Activated T-helper 1 cell treated with anti-CD3 and anti-CD28 coated beads, Interleukin-12 subunit alpha, Interleukin-12 subunit beta, Interleukin-2, Interleukin-4 antibody, amounts not matched to agents 30 ng/mL and 10 ng/mL and 1 ng/mL, durations not matched to agents 14 hours and 24 hours and 36 hours (primary cell): ENCODE measurements at regions of chr7 and their contacts with region 1.

Region 1: GRCh38 chr7:99392677-99393354 is 15.6 kb downstream of the PDAP1 start:
- DNase-seq: peak; percentile 69
- H3K4me3 Mint-ChIP-seq: peak overlapping the region; percentile 63
- H3K27ac Mint-ChIP-seq: peak overlapping the region; percentile 68
- H3K4me1 Mint-ChIP-seq: peaks cover 16% of the 10 kb centered on the region
- H3K27me3 Mint-ChIP-seq: no peaks in the 10 kb centered on the region

Region 2: GRCh38 chr7:98930921-98931320 is 461.9 kb before region 1 on chr7:
- intact Hi-C with region 1: no loop called
- DNase-seq: peak; percentile 8
- H3K4me3 Mint-ChIP-seq: no peak overlapping the region
- H3K27ac Mint-ChIP-seq: peak overlapping the region; percentile 63
- H3K4me1 Mint-ChIP-seq: peaks cover 8% of the 10 kb centered on the region
- H3K27me3 Mint-ChIP-seq: no peaks in the 10 kb centered on the region

Region 3: DNA sequence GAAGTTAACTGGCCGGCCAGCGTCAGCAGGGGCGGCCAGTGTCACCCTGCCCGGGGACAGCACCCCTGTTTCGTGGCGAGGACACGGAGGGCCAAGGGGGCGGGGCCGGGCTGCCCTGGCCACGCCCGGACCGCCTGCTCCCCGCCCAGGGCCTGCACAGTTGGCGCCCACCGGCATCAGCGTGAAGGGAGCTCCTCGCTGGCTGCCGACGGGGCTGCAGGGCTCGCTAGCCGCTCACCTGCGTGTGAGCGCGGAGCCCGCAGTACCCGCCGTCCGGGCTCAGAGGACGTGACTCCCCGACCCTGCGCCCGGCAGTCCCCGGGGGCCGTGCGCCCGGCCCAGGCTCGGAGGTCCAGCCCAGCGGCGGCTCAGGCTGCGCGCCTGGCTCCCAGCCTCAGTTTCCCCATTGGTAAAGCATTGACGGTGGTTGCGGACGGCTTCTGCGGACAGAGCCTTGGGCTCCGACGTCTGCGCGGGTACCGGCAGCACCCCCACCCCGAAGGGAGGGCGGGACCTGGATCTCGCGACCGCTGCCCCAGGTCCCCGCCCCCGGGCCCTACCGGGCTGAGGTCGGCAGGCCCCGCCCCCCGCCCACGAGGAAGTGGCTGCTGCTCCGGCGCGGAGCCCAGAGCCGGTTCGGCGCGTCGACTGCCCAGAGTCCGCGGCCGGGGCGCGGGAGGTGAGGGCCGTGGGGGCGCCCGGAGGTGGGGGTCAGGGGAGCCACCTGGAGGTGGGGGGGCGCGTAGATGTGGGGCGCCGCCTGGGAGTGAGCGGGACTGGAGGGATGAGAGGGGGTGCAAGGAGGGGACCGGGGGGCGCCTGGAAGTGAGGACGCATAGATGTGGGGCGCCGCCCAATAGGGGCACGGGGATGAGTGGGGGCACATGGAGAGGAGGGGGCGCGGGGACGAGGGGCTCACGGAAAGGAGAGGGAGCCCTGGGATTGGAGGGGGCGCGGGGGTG is 18.4 kb before region 1 on chr7 and contains the start of gene ARPC1B:
- intact Hi-C with region 1: loop called (anchors 2 kb)
- DNase-seq: peak; percentile 77
- H3K4me3 Mint-ChIP-seq: peak within 1 kb of the TSS; percentile 86
- H3K27ac Mint-ChIP-seq: peak within 1 kb of the TSS; percentile 72
- H3K4me1 Mint-ChIP-seq: peaks cover 15% of the 10 kb centered on the region
- H3K27me3 Mint-ChIP-seq: no peaks in the 10 kb centered on the region
- total RNA-seq, gene ARPC1B: 254 and 256 TPM in 2 replicates

Region 4: GRCh38 chr7:99422186-99422585 is 29.4 kb after region 1 on chr7:
- intact Hi-C with region 1: no loop called
- DNase-seq: no peak
- H3K4me3 Mint-ChIP-seq: no peak overlapping the region
- H3K27ac Mint-ChIP-seq: no peak overlapping the region
- H3K4me1 Mint-ChIP-seq: no peaks in the 10 kb centered on the region
- H3K27me3 Mint-ChIP-seq: no peaks in the 10 kb centered on the region

Region 5: GRCh38 chr7:99642027-99642426 is 249.2 kb after region 1 on chr7:
- intact Hi-C with region 1: no loop called
- DNase-seq: no peak
- H3K4me3 Mint-ChIP-seq: no peak overlapping the region
- H3K27ac Mint-ChIP-seq: peak overlapping the region; percentile 40
- H3K4me1 Mint-ChIP-seq: peaks cover 23% of the 10 kb centered on the region
- H3K27me3 Mint-ChIP-seq: no peaks in the 10 kb centered on the region